Panc1 (cell line): ENCODE measurements at regions of chr9 and their contacts with region 1.

Region 1: GRCh38 chr9:125043631-125044030 is 99.7 kb downstream of the SCAI start:
- DNase-seq: no peak
- ATAC-seq: no peak
- H3K4me3 ChIP-seq: no peak overlapping the region
- H3K27ac ChIP-seq: no peak overlapping the region
- H3K4me1 ChIP-seq: no peaks in the 10 kb centered on the region
- H3K27me3 ChIP-seq: no peaks in the 10 kb centered on the region
- CTCF ChIP-seq: no peak

Region 2: GRCh38 chr9:124954255-124954654 is 89.4 kb before region 1 on chr9:
- CTCF ChIA-PET with region 1: no interaction called
- POLR2A ChIA-PET with region 1: interaction called, 11 read pairs
- in situ Hi-C with region 1: no loop called
- intact Hi-C with region 1: no loop called
- DNase-seq: no peak
- ATAC-seq: no peak
- H3K4me3 ChIP-seq: no peak overlapping the region
- H3K27ac ChIP-seq: no peak overlapping the region
- H3K4me1 ChIP-seq: no peaks in the 10 kb centered on the region
- H3K27me3 ChIP-seq: no peaks in the 10 kb centered on the region
- CTCF ChIP-seq: no peak

Region 3: GRCh38 chr9:125003332-125003731 is 40.3 kb before region 1 on chr9:
- CTCF ChIA-PET with region 1: no interaction called
- POLR2A ChIA-PET with region 1: no interaction called
- in situ Hi-C with region 1: no loop called
- intact Hi-C with region 1: no loop called
- DNase-seq: no peak
- ATAC-seq: no peak
- H3K4me3 ChIP-seq: no peak overlapping the region
- H3K27ac ChIP-seq: no peak overlapping the region
- H3K4me1 ChIP-seq: no peaks in the 10 kb centered on the region
- H3K27me3 ChIP-seq: no peaks in the 10 kb centered on the region
- CTCF ChIP-seq: no peak